ENCODE measurements at regions of chr12 and their contacts with region 1.

Region 1: DNA sequence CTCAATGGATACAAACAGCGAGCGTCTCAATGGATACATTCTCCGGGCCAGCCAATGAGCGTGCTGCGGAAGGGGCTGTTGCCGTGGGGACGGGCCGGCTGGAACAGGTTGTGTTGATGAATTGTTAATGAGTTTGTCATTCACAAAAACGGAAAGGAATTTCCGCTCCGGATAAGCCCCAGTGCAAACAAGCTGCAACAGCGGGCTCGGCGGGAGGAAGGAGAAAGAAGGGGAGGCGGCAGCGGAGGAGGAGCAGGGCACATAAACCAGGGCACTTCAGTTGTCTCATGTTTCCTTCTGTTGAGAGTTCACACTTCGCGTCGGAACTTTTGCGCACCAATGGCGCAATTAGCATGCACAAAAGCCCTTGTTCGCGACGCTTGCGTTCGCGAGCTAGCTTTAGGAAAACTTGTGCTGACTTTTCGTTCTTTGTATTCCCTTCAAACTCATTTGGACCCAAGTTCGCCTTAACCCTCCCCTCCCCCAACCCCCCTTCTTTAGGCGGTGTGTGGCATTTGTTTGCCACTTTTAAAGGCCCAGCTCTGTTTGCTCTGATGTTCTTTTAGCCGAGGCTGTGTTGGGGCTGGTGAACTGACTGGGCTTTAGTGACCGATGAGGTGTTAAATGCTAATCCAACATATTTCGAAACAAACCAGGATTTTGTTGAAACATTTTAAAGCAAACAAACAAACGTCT is at the start of gene DUSP6:
- DNase-seq: peak; percentile 98
- ATAC-seq: peak; percentile 77
- total RNA-seq, gene DUSP6: 25.0 TPM

Region 2: DNA sequence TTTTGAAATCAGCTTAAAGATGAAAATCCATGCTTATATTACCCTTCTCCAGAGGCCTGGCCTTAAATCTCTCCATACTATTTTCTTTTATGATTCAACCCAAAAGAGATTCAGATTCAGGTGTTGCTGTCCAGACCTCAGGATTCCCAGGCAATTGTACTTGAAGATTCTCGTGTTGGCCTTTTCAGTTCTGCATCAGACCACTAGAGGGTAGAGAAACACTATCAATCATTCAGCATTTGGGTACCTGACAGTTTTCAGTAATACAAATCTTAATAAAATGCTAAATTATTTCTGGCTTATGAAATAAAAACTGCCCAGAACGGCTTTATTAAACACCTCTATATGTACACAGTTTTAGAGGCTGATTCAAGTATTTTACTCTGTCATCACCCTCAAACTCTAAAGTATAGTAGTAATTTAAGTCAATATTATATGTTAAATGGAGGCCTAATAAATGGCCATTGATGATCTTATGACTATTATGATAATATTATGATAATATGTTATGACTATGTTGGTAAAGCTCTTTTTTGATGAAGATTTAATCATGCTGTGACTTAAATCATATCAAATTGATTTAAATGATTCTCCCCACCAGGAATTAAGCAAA is 301.5 kb before region 1 on chr12:
- intact Hi-C with region 1: loop called (anchors 2 kb)
- DNase-seq: no peak
- ATAC-seq: peak; percentile 59

Region 3: DNA sequence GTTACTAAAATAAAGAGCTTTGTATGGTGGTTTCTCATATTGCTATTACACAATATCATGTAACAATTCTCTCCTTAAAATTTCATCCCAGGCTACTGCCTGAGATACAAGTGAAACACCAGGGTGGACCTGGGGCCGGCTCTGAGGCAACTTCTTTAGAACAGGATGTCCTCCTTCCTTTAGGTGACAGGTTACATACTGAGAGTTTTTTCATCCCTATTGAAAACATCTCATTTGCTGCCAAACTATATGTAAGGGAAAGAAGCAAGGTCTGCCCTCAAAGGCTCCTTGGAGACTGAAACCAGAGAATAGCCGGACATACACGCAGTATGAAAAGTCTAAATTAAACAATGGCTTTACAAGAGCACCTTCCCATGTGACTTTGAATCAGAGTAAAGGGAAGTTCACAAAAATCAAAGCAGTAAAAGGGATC is 140.3 kb before region 1 on chr12:
- intact Hi-C with region 1: loop called (anchors 2 kb)
- DNase-seq: peak; percentile 77
- ATAC-seq: peak; percentile 56

Region 4: DNA sequence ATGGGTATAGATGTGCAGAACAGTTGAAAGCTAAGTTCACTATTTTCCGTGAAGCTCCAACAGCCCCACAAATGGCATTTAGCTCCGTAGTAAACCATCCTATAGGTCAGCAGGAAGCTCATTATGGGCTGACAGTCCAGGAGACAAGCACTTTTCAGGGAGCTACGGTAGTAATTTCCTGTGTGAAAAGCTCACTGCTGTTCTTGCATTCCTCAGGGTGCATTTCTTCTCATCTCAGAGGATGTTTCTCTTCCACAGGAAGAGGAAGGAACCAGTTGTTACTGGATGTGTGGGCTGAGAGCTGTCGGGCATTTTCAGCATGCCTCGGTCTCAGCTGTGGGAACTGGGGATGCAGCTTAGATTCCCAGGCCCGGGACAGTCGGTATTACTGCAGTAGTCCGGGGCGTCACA is 99.2 kb after region 1 on chr12:
- intact Hi-C with region 1: loop called (anchors 2 kb)
- DNase-seq: peak; percentile 74
- ATAC-seq: peak; percentile 76

Region 5: GRCh38 chr12:89709157-89709994 is 356.7 kb after region 1 on chr12:
- intact Hi-C with region 1: loop called (anchors 10 kb)
- DNase-seq: peak; percentile 99
- ATAC-seq: peak; percentile 96

Measured in Right ventricle myocardium inferior (tissue), 1 donor.